Ovary (tissue), 10 donors: ENCODE measurements at regions of chr6 and their contacts with region 1.

Region 1: DNA sequence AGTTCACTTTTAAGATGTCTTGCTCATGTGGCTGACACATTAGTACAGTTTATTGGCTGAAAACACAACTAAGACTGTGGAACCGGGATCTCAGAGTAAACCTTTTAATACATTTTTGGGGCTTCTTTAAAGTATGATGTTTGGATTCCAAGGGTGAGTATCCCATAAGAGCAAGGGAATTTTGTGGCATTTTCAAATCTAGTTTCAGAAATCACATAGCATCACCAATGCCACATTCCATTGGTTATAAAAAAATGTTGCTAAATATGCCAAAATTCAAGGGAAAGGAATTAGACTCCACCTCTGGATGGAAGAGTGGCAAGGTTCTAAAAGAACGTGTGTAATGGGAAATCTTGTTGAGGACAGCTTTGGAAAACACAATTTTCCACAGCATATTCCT is 338.6 kb downstream of the COL12A1 start:
- DNase-seq: no peak
- H3K4me3 ChIP-seq: no peak overlapping the region
- H3K27ac ChIP-seq: no peak overlapping the region
- H3K4me1 ChIP-seq: peaks cover 9% of the 10 kb centered on the region
- H3K27me3 ChIP-seq: no peaks in the 10 kb centered on the region
- CTCF ChIP-seq: no peak
- EP300 ChIP-seq: no peak
- POLR2A ChIP-seq: no peak

Region 2: GRCh38 chr6:74764486-74764885 is 102.8 kb before region 1 on chr6:
- intact Hi-C with region 1: loop called in 1 of 4 experiments (anchors 10 kb)
- DNase-seq: no peak
- H3K4me3 ChIP-seq: no peak overlapping the region
- H3K27ac ChIP-seq: no peak overlapping the region
- H3K4me1 ChIP-seq: no peaks in the 10 kb centered on the region
- H3K27me3 ChIP-seq: no peaks in the 10 kb centered on the region
- CTCF ChIP-seq: no peak
- EP300 ChIP-seq: no peak
- POLR2A ChIP-seq: no peak